ENCODE measurements at regions of chr11 and their contacts with region 1.

Region 1: DNA sequence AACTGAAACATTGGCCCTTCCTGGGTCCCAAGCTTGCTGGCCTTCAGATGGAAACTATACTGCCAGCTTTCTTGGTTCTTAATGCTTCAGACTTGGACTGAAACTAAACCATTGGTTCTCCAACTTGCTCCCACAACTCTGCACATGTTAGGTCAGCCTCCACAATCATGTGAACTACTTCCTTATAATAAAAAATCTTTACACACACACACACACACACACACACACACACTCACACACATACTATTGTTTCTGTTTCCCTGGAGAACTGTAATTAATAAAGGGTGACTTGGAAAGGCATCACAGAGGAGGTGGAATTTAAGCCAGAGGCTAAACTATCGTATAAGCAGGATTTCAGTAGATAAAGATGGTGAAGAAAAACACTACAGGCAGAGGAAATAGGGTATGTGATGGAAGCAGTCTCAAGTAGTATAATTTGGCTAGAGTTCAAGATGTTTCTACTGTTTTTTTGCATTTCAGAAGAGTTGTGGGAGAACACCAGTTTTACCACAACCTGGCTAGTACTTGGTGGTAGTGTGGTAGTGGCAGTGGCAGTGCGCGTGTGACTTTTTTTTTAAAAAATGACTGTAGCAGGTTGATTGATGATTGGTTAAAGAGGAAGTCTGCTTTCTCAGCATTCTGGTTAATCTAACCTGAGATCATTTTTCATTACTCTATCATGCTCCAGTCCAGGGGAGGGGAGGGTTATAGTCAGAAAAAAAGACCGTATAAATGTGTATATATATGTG is 70.1 kb downstream of the PDE3B start:
- DNase-seq: peak in 6 of 14 experiments; percentile 12 to 81 (median 57)
- ATAC-seq: peak; percentile 79
- H3K4me3 ChIP-seq: peak overlapping the region; percentile 13
- H3K4me3 Mint-ChIP-seq: peak overlapping the region; percentile 66
- H3K27ac ChIP-seq: peak overlapping the region in 1 of 2 donors; percentile 23
- H3K27ac Mint-ChIP-seq: peak overlapping the region; percentile 68
- H3K4me1 ChIP-seq: peaks cover 18% of the 10 kb centered on the region
- H3K4me1 Mint-ChIP-seq: peaks cover 51% of the 10 kb centered on the region
- H3K27me3 ChIP-seq: no peaks in the 10 kb centered on the region
- H3K27me3 Mint-ChIP-seq: no peaks in the 10 kb centered on the region
- CTCF ChIP-seq: no peak

Region 2: GRCh38 chr11:14393889-14394288 is 319.8 kb before region 1 on chr11:
- CTCF ChIA-PET with region 1: no interaction called
- POLR2A ChIA-PET with region 1: no interaction called
- intact Hi-C with region 1: no loop called
- DNase-seq: peak in 1 of 14 experiments; percentile 57
- ATAC-seq: no peak
- H3K4me3 ChIP-seq: no peak overlapping the region
- H3K4me3 Mint-ChIP-seq: no peak overlapping the region
- H3K27ac ChIP-seq: no peak overlapping the region
- H3K27ac Mint-ChIP-seq: no peak overlapping the region
- H3K4me1 ChIP-seq: peaks cover 5% of the 10 kb centered on the region
- H3K4me1 Mint-ChIP-seq: peaks cover 4% of the 10 kb centered on the region
- H3K27me3 ChIP-seq: no peaks in the 10 kb centered on the region
- H3K27me3 Mint-ChIP-seq: no peaks in the 10 kb centered on the region
- CTCF ChIP-seq: no peak

Region 3: GRCh38 chr11:14606741-14607140 is 106.9 kb before region 1 on chr11:
- CTCF ChIA-PET with region 1: no interaction called
- POLR2A ChIA-PET with region 1: no interaction called
- intact Hi-C with region 1: no loop called
- DNase-seq: no peak
- ATAC-seq: no peak
- H3K4me3 ChIP-seq: no peak overlapping the region
- H3K4me3 Mint-ChIP-seq: no peak overlapping the region
- H3K27ac ChIP-seq: no peak overlapping the region
- H3K27ac Mint-ChIP-seq: no peak overlapping the region
- H3K4me1 ChIP-seq: no peaks in the 10 kb centered on the region
- H3K4me1 Mint-ChIP-seq: peaks cover 16% of the 10 kb centered on the region
- H3K27me3 ChIP-seq: no peaks in the 10 kb centered on the region
- H3K27me3 Mint-ChIP-seq: no peaks in the 10 kb centered on the region
- CTCF ChIP-seq: no peak

Region 4: GRCh38 chr11:14751975-14752407 is 38.3 kb after region 1 on chr11:
- CTCF ChIA-PET with region 1: no interaction called
- POLR2A ChIA-PET with region 1: interaction called, 3 read pairs
- intact Hi-C with region 1: loop called in 1 of 2 experiments (anchors 5 kb)
- DNase-seq: peak in 1 of 14 experiments; percentile 25
- ATAC-seq: no peak
- H3K4me3 ChIP-seq: no peak overlapping the region
- H3K4me3 Mint-ChIP-seq: peak overlapping the region; percentile 68
- H3K27ac ChIP-seq: no peak overlapping the region
- H3K27ac Mint-ChIP-seq: peak overlapping the region; percentile 52
- H3K4me1 ChIP-seq: peaks cover 4% of the 10 kb centered on the region
- H3K4me1 Mint-ChIP-seq: peaks cover 77% of the 10 kb centered on the region
- H3K27me3 ChIP-seq: no peaks in the 10 kb centered on the region
- H3K27me3 Mint-ChIP-seq: no peaks in the 10 kb centered on the region
- CTCF ChIP-seq: no peak